ENCODE measurements at regions of chr19 and their contacts with region 1.

Region 1: GRCh38 chr19:55258828-55259539 is at the start of gene PPP6R1:
- DNase-seq: peak; percentile 98
- H3K4me3 ChIP-seq: peak within 1 kb of the TSS; percentile 78
- H3K27ac ChIP-seq: peak within 1 kb of the TSS; percentile 97
- H3K4me1 ChIP-seq: peaks cover 41% of the 10 kb centered on the region
- CTCF ChIP-seq: no peak
- total RNA-seq, gene PPP6R1: 82.0 and 89.6 TPM in 2 replicates

Region 2: GRCh38 chr19:55178781-55179599 is 80.0 kb before region 1 on chr19:
- CTCF ChIA-PET with region 1: no interaction called
- POLR2A ChIA-PET with region 1: no interaction called
- intact Hi-C with region 1: loop called (anchors 2 kb)
- DNase-seq: peak; percentile 90
- H3K4me3 ChIP-seq: peak overlapping the region; percentile 65
- H3K27ac ChIP-seq: no peak overlapping the region
- H3K4me1 ChIP-seq: peaks cover 26% of the 10 kb centered on the region
- CTCF ChIP-seq: no peak

Region 3: GRCh38 chr19:55212447-55212846 is 46.5 kb before region 1 on chr19:
- CTCF ChIA-PET with region 1: no interaction called
- POLR2A ChIA-PET with region 1: no interaction called
- intact Hi-C with region 1: loop called (anchors 2 kb)
- DNase-seq: peak; percentile 87
- H3K4me3 ChIP-seq: no peak overlapping the region
- H3K27ac ChIP-seq: no peak overlapping the region
- H3K4me1 ChIP-seq: peaks cover 16% of the 10 kb centered on the region
- CTCF ChIP-seq: peak; percentile 97

Region 4: GRCh38 chr19:55279770-55280643 is 21.0 kb after region 1 on chr19 and contains the start of gene HSPBP1:
- CTCF ChIA-PET with region 1: no interaction called
- POLR2A ChIA-PET with region 1: interaction called, 32 read pairs
- intact Hi-C with region 1: loop called (anchors 1 kb)
- DNase-seq: peak; percentile 98
- H3K4me3 ChIP-seq: peak within 1 kb of the TSS; percentile 95
- H3K27ac ChIP-seq: peak within 1 kb of the TSS; percentile 93
- H3K4me1 ChIP-seq: peaks cover 78% of the 10 kb centered on the region
- CTCF ChIP-seq: no peak
- total RNA-seq, gene HSPBP1: 41.3 and 50.5 TPM in 2 replicates

Region 5: DNA sequence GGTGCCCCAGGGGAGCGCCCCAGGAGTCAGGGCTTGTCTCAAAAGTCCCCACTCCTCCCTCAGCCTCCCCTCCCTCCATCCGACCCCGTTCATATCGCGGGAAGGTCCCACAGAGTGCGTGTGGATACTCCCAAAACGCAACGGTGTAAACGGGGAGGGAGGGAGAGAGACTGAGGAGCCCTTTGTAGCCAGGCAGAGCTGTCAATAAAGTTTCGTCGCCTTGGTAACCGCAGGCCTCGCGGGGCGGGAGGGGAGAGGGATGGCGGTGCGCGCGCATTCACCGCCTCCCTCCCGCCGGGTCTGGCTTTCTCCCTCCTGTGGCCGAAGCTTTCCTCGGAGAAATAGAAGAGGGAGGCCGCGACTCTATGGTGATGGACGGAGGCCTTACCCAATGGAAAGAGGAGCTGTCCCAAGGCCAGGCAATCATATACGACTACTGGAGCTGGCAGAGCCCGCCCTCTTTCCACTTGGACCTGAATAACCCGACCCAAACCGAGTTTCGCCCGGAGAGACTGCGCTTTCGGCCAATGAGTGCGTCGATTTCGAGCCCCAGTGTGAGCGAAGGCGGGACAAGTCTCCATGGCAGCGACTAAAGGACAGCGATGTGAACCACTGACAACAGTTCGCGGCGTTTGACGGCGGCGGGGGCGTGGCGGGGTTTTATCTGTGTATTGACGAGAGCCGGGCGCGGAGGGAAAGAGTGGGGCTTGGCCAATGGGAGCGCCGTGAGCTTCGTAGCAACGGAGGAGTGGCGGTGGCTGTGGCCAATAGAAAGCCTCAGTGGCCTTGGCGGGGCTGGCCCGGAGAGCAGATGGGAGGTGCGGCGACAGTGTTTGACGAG is 80.3 kb after region 1 on chr19 and contains the start of gene KMT5C:
- CTCF ChIA-PET with region 1: interaction called, 4 read pairs
- POLR2A ChIA-PET with region 1: interaction called, 3 read pairs
- intact Hi-C with region 1: loop called (anchors 1 kb)
- DNase-seq: peak; percentile 100
- H3K4me3 ChIP-seq: peak within 1 kb of the TSS; percentile 89
- H3K27ac ChIP-seq: peak within 1 kb of the TSS; percentile 53
- H3K4me1 ChIP-seq: peaks cover 28% of the 10 kb centered on the region
- CTCF ChIP-seq: no peak
- total RNA-seq, gene KMT5C: 21.2 and 22.8 TPM in 2 replicates

Region 6: GRCh38 chr19:55508120-55508519 is 249.1 kb after region 1 on chr19:
- CTCF ChIA-PET with region 1: no interaction called
- POLR2A ChIA-PET with region 1: no interaction called
- intact Hi-C with region 1: no loop called
- DNase-seq: no peak
- H3K4me3 ChIP-seq: no peak overlapping the region
- H3K27ac ChIP-seq: no peak overlapping the region
- H3K4me1 ChIP-seq: peaks cover 6% of the 10 kb centered on the region
- CTCF ChIP-seq: no peak

Measured in OCI-LY7 (cell line).